Psoas muscle (tissue), 8 donors: ENCODE measurements at regions of chr15 and their contacts with region 1.

Region 1: GRCh38 chr15:78234515-78235040 is at the start of gene ACSBG1:
- DNase-seq: no peak
- ATAC-seq: no peak
- H3K4me3 ChIP-seq: no peak within 1 kb of the TSS
- H3K27ac ChIP-seq: no peak within 1 kb of the TSS
- H3K4me1 ChIP-seq: no peaks in the 10 kb centered on the region
- H3K27me3 ChIP-seq: no peaks in the 10 kb centered on the region
- CTCF ChIP-seq: no peak
- total RNA-seq, gene ACSBG1: 0.12 TPM in 1 of 4 donors, not detected in the others

Region 2: GRCh38 chr15:77440378-77440999 is 794.1 kb before region 1 on chr15:
- intact Hi-C with region 1: no loop called
- DNase-seq: no peak
- ATAC-seq: peak; percentile 85 to 96 (median 90)
- H3K4me3 ChIP-seq: peak overlapping the region; percentile 9
- H3K27ac ChIP-seq: peak overlapping the region; percentile 54
- H3K4me1 ChIP-seq: peaks cover 29% of the 10 kb centered on the region
- H3K27me3 ChIP-seq: no peaks in the 10 kb centered on the region
- CTCF ChIP-seq: no peak

Region 3: GRCh38 chr15:78120523-78120922 is 114.1 kb before region 1 on chr15:
- intact Hi-C with region 1: loop called in 1 of 2 experiments (anchors 5 kb)
- DNase-seq: no peak
- ATAC-seq: peak in 1 of 4 donors; percentile 40
- H3K4me3 ChIP-seq: no peak overlapping the region
- H3K27ac ChIP-seq: no peak overlapping the region
- H3K4me1 ChIP-seq: no peaks in the 10 kb centered on the region
- H3K27me3 ChIP-seq: no peaks in the 10 kb centered on the region
- CTCF ChIP-seq: no peak